CD8-positive, alpha-beta T cell (primary cell): ENCODE measurements at regions of chr19 and their contacts with region 1.

Region 1: GRCh38 chr19:50461066-50461875 is 15.0 kb upstream of the EMC10 start:
- DNase-seq: peak; percentile 33 to 77 (median 55)
- ATAC-seq: peak; percentile 94
- H3K4me3 ChIP-seq: no peak overlapping the region
- H3K4me3 Mint-ChIP-seq: no peak overlapping the region
- H3K27ac ChIP-seq: no peak overlapping the region
- H3K27ac Mint-ChIP-seq: no peak overlapping the region
- H3K4me1 ChIP-seq: no peaks in the 10 kb centered on the region
- H3K4me1 Mint-ChIP-seq: no peaks in the 10 kb centered on the region
- H3K27me3 ChIP-seq: peaks cover 0 to 10% of the 10 kb centered on the region in 2 experiments
- H3K27me3 Mint-ChIP-seq: peaks cover 36% of the 10 kb centered on the region
- CTCF ChIP-seq: peak; percentile 81

Region 2: DNA sequence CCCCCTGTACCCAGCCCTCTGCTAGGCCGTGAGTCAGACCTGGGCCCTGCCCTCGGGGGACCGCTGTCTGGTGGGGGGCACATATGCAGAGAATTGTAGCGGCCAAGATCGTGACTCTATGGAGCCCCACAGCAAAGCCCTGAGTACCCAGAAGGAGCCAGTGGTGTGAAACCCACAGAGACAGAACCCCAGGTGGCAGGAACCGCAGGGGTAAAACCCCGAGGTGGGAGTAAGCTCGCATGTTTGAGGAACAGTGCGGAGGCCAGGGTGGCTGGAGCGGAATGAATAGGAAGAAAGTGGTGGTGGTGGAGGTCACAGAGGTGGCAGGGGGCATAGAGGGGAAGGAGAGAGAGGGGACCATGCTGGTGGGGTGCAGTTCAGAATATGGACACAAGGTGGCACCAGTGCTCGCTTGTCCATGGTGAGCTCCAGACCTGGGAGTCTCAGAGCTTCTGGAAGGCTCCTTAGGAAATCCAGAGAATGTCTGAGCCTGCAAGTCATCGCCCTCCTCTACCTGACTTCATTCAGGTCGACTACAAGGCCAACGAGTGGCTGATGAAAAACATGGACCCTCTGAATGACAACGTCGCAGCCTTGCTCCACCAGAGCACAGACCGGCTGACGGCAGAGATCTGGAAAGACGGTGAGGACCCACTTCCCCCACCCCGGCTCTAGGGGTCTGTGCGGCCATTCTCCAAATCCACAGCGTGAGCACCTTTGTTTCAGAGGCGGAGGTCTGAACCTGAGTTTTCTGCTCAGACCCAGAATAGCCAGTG is 209.0 kb before region 1 on chr19:
- CTCF ChIA-PET with region 1: no interaction called
- POLR2A ChIA-PET with region 1: no interaction called
- intact Hi-C with region 1: loop called in 1 of 2 experiments (anchors 5 kb)
- DNase-seq: peak in 5 of 9 experiments; percentile 5 to 38 (median 30)
- ATAC-seq: no peak
- H3K4me3 ChIP-seq: no peak overlapping the region
- H3K4me3 Mint-ChIP-seq: no peak overlapping the region
- H3K27ac ChIP-seq: no peak overlapping the region
- H3K27ac Mint-ChIP-seq: no peak overlapping the region
- H3K4me1 ChIP-seq: no peaks in the 10 kb centered on the region
- H3K4me1 Mint-ChIP-seq: no peaks in the 10 kb centered on the region
- H3K27me3 ChIP-seq: peaks cover 0 to 2% of the 10 kb centered on the region in 2 experiments
- H3K27me3 Mint-ChIP-seq: peaks cover 26% of the 10 kb centered on the region
- CTCF ChIP-seq: peak; percentile 46

Region 3: DNA sequence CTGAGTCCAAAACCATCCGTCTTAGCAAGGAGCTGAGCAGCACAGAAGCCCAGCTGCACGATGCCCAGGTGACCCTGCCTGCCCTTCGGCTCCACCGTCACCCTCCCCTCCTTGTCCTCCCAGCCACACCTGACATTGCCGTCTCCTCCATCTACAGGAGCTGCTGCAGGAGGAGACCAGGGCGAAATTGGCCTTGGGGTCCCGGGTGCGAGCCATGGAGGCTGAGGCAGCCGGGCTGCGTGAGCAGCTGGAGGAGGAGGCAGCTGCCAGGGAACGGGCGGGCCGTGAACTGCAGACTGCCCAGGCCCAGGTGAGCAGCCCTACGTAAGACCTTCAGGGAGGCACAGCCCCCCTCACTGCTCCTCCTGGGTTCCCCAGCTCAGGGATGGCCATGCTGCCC is 181.2 kb before region 1 on chr19:
- CTCF ChIA-PET with region 1: no interaction called
- POLR2A ChIA-PET with region 1: no interaction called
- intact Hi-C with region 1: no loop called
- DNase-seq: no peak
- ATAC-seq: no peak
- H3K4me3 ChIP-seq: no peak overlapping the region
- H3K4me3 Mint-ChIP-seq: no peak overlapping the region
- H3K27ac ChIP-seq: no peak overlapping the region
- H3K27ac Mint-ChIP-seq: no peak overlapping the region
- H3K4me1 ChIP-seq: no peaks in the 10 kb centered on the region
- H3K4me1 Mint-ChIP-seq: no peaks in the 10 kb centered on the region
- H3K27me3 ChIP-seq: peaks cover 0 to 2% of the 10 kb centered on the region in 2 experiments
- H3K27me3 Mint-ChIP-seq: peaks cover 15% of the 10 kb centered on the region
- CTCF ChIP-seq: no peak

Region 4: GRCh38 chr19:50368649-50369570 is 92.4 kb before region 1 on chr19:
- CTCF ChIA-PET with region 1: interaction called, 42 read pairs
- POLR2A ChIA-PET with region 1: no interaction called
- intact Hi-C with region 1: loop called in 1 of 2 experiments (anchors 1 kb)
- DNase-seq: peak; percentile 59 to 91 (median 79)
- ATAC-seq: peak; percentile 81
- H3K4me3 ChIP-seq: peak overlapping the region; percentile 52 to 66
- H3K4me3 Mint-ChIP-seq: peak overlapping the region; percentile 87
- H3K27ac ChIP-seq: peak overlapping the region; percentile 32 to 49
- H3K27ac Mint-ChIP-seq: peak overlapping the region; percentile 82
- H3K4me1 ChIP-seq: peaks cover 15% of the 10 kb centered on the region
- H3K4me1 Mint-ChIP-seq: peaks cover 28% of the 10 kb centered on the region
- H3K27me3 ChIP-seq: no peaks in the 10 kb centered on the region
- H3K27me3 Mint-ChIP-seq: no peaks in the 10 kb centered on the region
- CTCF ChIP-seq: peak; percentile 86

Region 5: GRCh38 chr19:50537762-50538230 is 76.5 kb after region 1 on chr19:
- CTCF ChIA-PET with region 1: no interaction called
- POLR2A ChIA-PET with region 1: no interaction called
- intact Hi-C with region 1: no loop called
- DNase-seq: peak in 8 of 9 experiments; percentile 35 to 71 (median 62)
- ATAC-seq: no peak
- H3K4me3 ChIP-seq: no peak overlapping the region
- H3K4me3 Mint-ChIP-seq: no peak overlapping the region
- H3K27ac ChIP-seq: no peak overlapping the region
- H3K27ac Mint-ChIP-seq: no peak overlapping the region
- H3K4me1 ChIP-seq: no peaks in the 10 kb centered on the region
- H3K4me1 Mint-ChIP-seq: peaks cover 3% of the 10 kb centered on the region
- H3K27me3 ChIP-seq: peaks cover 0 to 5% of the 10 kb centered on the region in 2 experiments
- H3K27me3 Mint-ChIP-seq: peaks cover 16% of the 10 kb centered on the region
- CTCF ChIP-seq: peak; percentile 62